Astrocyte of the cerebellum (primary cell): ENCODE measurements at regions of chr1 and their contacts with region 1.

Region 1: DNA sequence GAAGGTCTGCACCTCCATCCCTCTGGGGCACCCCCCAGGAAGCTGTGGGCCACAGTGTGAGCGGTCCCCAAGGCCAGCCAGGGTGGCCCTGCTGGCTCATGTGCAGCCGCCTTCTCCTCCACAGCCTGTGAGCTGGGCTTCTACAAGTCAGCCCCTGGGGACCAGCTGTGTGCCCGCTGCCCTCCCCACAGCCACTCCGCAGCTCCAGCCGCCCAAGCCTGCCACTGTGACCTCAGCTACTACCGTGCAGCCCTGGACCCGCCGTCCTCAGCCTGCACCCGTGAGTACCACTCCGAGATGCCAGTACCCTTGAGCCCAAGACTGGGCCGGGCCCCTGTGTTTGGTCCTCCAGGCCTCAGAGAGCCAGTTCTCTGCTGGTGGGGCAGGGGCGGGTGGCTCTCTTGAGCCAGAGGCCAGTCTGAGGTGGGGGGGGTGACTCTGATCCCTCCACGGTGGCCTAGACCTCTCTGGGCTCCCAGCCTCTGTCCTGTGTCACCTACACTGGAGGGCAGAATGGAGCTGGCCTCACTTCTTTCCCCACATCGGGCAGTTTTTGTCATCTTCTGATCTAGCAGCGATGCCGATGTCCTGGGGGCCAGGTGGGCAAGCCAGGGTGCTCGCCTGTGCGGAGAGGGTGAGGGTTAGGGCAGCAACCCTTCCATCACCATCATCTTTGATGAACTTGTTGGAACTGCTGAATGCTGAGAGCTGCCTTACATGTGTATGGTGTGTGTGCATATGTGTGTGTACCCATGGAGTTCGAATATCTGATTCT is 23.3 kb downstream of the EPHA8 start:
- DNase-seq: no peak
- H3K4me3 ChIP-seq: no peak overlapping the region
- CTCF ChIP-seq: no peak

Region 2: GRCh38 chr1:22488319-22488718 is 98.2 kb before region 1 on chr1:
- in situ Hi-C with region 1: loop called (anchors 5 kb)
- DNase-seq: no peak
- H3K4me3 ChIP-seq: no peak overlapping the region
- CTCF ChIP-seq: no peak

Region 3: DNA sequence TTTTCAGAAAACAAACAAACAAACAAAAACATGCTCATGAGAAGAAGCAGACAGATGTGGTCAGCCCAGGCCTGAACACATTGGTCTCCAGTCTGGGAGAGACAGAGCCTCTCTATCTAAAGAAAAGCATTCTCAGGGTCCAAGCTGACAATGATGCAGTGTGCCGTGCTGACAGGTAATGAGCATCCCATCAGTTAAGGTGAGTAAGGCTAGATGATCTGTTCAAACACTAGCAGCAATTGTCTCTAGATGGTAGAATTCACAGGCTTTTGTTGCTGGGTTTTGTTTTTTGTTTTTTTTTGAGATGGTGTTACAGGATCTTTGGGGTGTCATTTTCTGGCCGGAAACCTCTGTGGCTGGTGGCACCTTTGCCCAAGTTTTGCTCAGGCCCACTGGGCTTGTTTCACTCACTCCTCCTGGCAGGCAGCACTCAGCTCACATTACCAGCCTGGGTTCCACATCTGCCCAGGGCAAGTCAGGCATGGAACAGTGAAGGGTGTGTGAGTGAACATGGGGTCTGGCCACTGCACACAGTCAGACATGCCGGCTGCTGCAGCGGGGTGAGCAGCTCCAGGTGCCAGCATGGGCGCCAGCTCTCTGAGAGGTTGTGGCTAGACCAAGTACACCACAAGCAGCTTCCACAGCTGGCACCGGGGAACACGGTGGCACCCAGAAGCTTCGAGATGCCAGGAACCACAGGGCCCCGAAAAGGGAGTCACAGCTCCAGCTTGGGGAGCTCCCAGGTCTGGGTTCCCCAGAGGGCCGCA is 47.3 kb after region 1 on chr1:
- in situ Hi-C with region 1: loop called (anchors 5 kb)
- DNase-seq: no peak
- H3K4me3 ChIP-seq: no peak overlapping the region
- CTCF ChIP-seq: no peak